ENCODE measurements at regions of chr6 and their contacts with region 1.

Region 1: DNA sequence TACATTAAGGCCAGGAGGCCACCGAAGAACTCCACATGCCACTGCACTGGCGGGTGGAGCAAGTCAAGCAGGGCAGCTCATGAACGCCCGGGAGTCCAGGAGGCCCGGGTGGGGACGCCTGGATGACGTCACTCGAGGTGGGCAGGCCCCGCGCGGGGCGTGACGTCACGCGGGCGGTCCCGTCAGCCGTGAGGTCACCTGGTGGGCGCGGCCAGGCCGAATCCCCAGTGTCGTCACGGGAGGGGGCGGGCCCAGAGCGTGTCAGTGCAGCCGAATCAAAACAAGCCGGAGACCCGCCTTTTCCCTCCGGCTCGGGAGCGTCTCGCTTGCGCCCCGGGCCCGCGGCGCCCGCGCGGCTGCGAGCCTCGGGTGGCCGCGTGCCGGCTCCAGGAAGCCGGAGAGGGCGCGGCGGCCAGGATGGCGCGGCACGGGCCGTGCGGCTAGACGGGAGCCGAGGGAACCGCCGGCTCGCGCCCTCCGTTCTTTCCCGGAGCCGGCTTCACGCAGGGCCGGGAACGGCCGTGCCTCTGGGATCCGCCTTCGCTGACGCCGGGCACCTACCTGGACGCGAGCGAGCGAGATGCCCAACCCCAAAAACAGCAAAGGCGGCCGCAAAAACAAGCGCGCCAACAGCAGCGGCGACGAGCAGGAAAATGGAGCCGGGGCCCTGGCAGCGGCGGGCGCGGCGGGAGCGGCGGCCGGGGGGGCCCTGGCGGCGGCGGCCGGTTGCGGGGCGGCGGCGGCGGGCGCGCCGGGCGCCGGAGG is at the start of gene HECA:
- DNase-seq: peak; percentile 99 to 100 (median 99)
- ATAC-seq: peak; percentile 91
- H3K4me3 ChIP-seq: peak within 1 kb of the TSS; percentile 93
- H3K4me3 Mint-ChIP-seq: peak within 1 kb of the TSS; percentile 84 to 99 (median 93)
- H3K27ac ChIP-seq: peak within 1 kb of the TSS; percentile 100
- H3K27ac Mint-ChIP-seq: peak within 1 kb of the TSS; percentile 95 to 100 (median 99)
- H3K4me1 ChIP-seq: peaks cover 21 to 43% of the 10 kb centered on the region in 2 donors
- H3K4me1 Mint-ChIP-seq: peaks cover 51 to 77% (median 66%) of the 10 kb centered on the region in 7 donors
- H3K27me3 ChIP-seq: no peaks in the 10 kb centered on the region
- H3K27me3 Mint-ChIP-seq: peaks cover 0 to 2% (median 0%) of the 10 kb centered on the region in 5 donors
- total RNA-seq, gene HECA: 54.1 to 145 (median 130) TPM

Region 2: DNA sequence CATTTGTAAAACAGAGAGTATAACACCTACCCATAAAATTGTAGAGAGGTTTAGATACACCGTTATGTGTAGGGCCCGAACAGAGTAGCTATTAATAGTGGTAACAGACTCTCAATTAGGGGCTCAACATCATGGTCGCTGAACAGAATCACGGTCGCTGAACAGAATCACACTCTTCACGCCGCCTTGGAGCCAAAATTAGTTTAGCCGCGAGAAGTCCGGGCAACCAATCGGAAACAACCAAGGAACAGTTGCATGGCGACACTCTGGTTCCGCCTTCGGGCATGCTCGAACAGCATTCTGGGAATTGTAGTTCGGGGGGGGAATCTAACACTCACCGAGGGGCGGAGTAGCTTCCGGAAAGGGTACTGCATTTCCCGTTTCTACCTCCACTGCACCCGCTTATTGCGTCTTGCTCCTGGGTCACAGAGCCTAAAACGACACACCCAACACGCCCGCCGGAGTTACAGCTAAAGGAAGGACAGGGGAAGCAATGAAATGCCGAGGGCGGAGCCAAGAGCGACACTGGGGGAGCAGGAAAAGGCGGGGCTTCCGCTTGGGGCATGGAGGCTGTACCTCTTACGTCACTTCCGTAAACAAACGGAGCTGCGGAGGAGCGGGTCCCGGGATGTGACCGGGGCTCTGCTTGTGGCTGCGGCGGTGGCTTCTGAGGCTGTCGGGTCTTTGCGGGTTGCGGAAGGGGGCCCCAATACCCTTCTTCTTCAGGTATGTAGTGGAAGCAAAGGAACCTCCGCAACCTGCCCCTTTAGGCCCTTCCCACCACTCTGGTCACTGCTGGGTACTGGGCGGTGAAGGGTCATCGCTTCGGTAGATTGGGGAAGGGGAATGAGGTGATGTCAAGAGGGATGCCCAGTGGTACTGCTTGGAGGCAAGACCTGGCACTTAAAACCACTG is 361.6 kb before region 1 on chr6 and contains the start of gene CCDC28A:
- CTCF ChIA-PET with region 1: no interaction called
- POLR2A ChIA-PET with region 1: no interaction called
- intact Hi-C with region 1: loop called (anchors 1 kb)
- DNase-seq: peak; percentile 86 to 98 (median 97)
- ATAC-seq: peak; percentile 93
- H3K4me3 ChIP-seq: peak within 1 kb of the TSS; percentile 94
- H3K4me3 Mint-ChIP-seq: peak within 1 kb of the TSS; percentile 91 to 100 (median 99)
- H3K27ac ChIP-seq: peak within 1 kb of the TSS; percentile 87
- H3K27ac Mint-ChIP-seq: peak within 1 kb of the TSS; percentile 96 to 100 (median 100)
- H3K4me1 ChIP-seq: peaks cover 6 to 10% of the 10 kb centered on the region in 2 donors
- H3K4me1 Mint-ChIP-seq: peaks cover 4 to 39% (median 36%) of the 10 kb centered on the region in 7 donors
- H3K27me3 ChIP-seq: no peaks in the 10 kb centered on the region
- H3K27me3 Mint-ChIP-seq: no peaks in the 10 kb centered on the region
- total RNA-seq, gene CCDC28A: 19.9 to 34.2 (median 25.6) TPM

Region 3: GRCh38 chr6:139109558-139109957 is 25.4 kb before region 1 on chr6:
- CTCF ChIA-PET with region 1: interaction called, 10 read pairs
- POLR2A ChIA-PET with region 1: interaction called, 37 read pairs
- intact Hi-C with region 1: loop called in 1 of 2 experiments (anchors 1 kb)
- DNase-seq: peak in 2 of 9 donors; percentile 21 to 28
- ATAC-seq: no peak
- H3K4me3 ChIP-seq: no peak overlapping the region
- H3K4me3 Mint-ChIP-seq: peak overlapping the region in 2 of 10 donors; percentile 6 to 36
- H3K27ac ChIP-seq: no peak overlapping the region
- H3K27ac Mint-ChIP-seq: peak overlapping the region in 8 of 9 donors; percentile 38 to 94 (median 86)
- H3K4me1 ChIP-seq: peaks cover 36 to 48% of the 10 kb centered on the region in 2 donors
- H3K4me1 Mint-ChIP-seq: peaks cover 17 to 74% (median 59%) of the 10 kb centered on the region in 7 donors
- H3K27me3 ChIP-seq: no peaks in the 10 kb centered on the region
- H3K27me3 Mint-ChIP-seq: no peaks in the 10 kb centered on the region

Region 4: GRCh38 chr6:139146317-139146726 is 11.3 kb after region 1 on chr6:
- CTCF ChIA-PET with region 1: interaction called, 5 read pairs
- POLR2A ChIA-PET with region 1: interaction called, 214 read pairs
- intact Hi-C with region 1: loop called (anchors 1 kb)
- DNase-seq: no peak
- ATAC-seq: peak; percentile 31
- H3K4me3 ChIP-seq: peak overlapping the region; percentile 43
- H3K4me3 Mint-ChIP-seq: peak overlapping the region; percentile 68 to 85 (median 80)
- H3K27ac ChIP-seq: peak overlapping the region; percentile 4
- H3K27ac Mint-ChIP-seq: peak overlapping the region; percentile 37 to 91 (median 73)
- H3K4me1 ChIP-seq: peaks cover 80 to 89% of the 10 kb centered on the region in 2 donors
- H3K4me1 Mint-ChIP-seq: peaks cover 88 to 97% (median 94%) of the 10 kb centered on the region in 7 donors
- H3K27me3 ChIP-seq: no peaks in the 10 kb centered on the region
- H3K27me3 Mint-ChIP-seq: no peaks in the 10 kb centered on the region

Region 5: GRCh38 chr6:139161817-139162284 is 26.9 kb after region 1 on chr6:
- CTCF ChIA-PET with region 1: interaction called, 5 read pairs
- POLR2A ChIA-PET with region 1: interaction called, 214 read pairs
- intact Hi-C with region 1: loop called (anchors 1 kb)
- DNase-seq: peak in 8 of 9 donors; percentile 59 to 78 (median 73)
- ATAC-seq: peak; percentile 64
- H3K4me3 ChIP-seq: peak overlapping the region; percentile 11
- H3K4me3 Mint-ChIP-seq: peak overlapping the region; percentile 79 to 88 (median 83)
- H3K27ac ChIP-seq: peak overlapping the region; percentile 75
- H3K27ac Mint-ChIP-seq: peak overlapping the region; percentile 86 to 98 (median 91)
- H3K4me1 ChIP-seq: peaks cover 81 to 85% of the 10 kb centered on the region in 2 donors
- H3K4me1 Mint-ChIP-seq: peaks cover 70 to 96% (median 86%) of the 10 kb centered on the region in 7 donors
- H3K27me3 ChIP-seq: no peaks in the 10 kb centered on the region
- H3K27me3 Mint-ChIP-seq: no peaks in the 10 kb centered on the region

Region 6: DNA sequence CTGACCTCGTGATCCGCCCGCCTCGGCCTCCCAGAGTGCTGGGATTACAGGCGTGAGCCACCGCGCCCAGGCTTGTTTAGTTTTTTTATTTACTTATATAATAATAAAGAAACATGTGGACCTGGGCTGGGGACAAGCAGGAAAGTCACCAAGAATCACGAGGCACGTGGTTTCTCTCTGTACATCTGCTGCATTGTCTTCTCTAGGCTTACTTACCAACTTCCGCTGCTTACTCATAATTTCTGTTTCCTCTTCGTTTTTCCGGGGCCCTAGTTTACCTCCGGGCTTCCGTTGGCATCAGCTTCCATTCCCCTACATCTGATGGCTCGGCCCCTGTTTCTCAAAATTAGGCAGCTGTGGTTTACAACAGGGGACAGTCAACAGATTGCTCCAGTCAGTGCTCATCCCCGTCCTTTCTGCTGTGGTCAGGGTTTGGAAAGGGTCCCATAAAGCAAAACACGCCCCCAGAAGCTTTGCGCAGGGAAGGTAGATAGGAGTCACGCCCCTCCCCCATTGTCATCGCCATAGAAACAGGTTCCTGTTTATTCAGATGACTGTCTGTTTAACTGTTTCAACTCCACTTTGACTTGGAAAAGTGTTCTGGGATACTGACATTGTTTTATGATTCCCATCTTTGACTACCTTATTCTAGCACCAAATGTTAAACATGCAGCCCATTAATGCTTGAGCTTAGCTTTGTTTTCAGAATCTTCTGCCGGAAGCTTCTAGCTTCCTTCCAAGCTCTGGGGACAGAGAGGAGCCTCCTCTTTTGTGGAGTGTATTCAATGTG is 188.7 kb after region 1 on chr6:
- CTCF ChIA-PET with region 1: no interaction called
- POLR2A ChIA-PET with region 1: interaction called, 5 read pairs
- intact Hi-C with region 1: loop called in 1 of 2 experiments (anchors 1 kb)
- DNase-seq: peak; percentile 54 to 90 (median 86)
- ATAC-seq: peak; percentile 90
- H3K4me3 ChIP-seq: peak overlapping the region; percentile 64
- H3K4me3 Mint-ChIP-seq: peak overlapping the region; percentile 80 to 96 (median 90)
- H3K27ac ChIP-seq: peak overlapping the region; percentile 83
- H3K27ac Mint-ChIP-seq: peak overlapping the region; percentile 96 to 100 (median 99)
- H3K4me1 ChIP-seq: peaks cover 12 to 19% of the 10 kb centered on the region in 2 donors
- H3K4me1 Mint-ChIP-seq: peaks cover 19 to 44% (median 32%) of the 10 kb centered on the region in 7 donors
- H3K27me3 ChIP-seq: no peaks in the 10 kb centered on the region
- H3K27me3 Mint-ChIP-seq: no peaks in the 10 kb centered on the region

Region 7: GRCh38 chr6:139577763-139578604 is 443.0 kb after region 1 on chr6:
- CTCF ChIA-PET with region 1: no interaction called
- POLR2A ChIA-PET with region 1: no interaction called
- intact Hi-C with region 1: no loop called
- DNase-seq: no peak
- ATAC-seq: no peak
- H3K4me3 ChIP-seq: no peak overlapping the region
- H3K4me3 Mint-ChIP-seq: no peak overlapping the region
- H3K27ac ChIP-seq: no peak overlapping the region
- H3K27ac Mint-ChIP-seq: no peak overlapping the region
- H3K4me1 ChIP-seq: peaks cover 0 to 11% of the 10 kb centered on the region in 2 donors
- H3K4me1 Mint-ChIP-seq: peaks cover 12 to 19% (median 14%) of the 10 kb centered on the region in 7 donors
- H3K27me3 ChIP-seq: no peaks in the 10 kb centered on the region
- H3K27me3 Mint-ChIP-seq: peaks cover 0 to 23% (median 6%) of the 10 kb centered on the region in 5 donors

Measured in naive thymus-derived CD4-positive, alpha-beta T cell (primary cell).